AG04450 (cell line): ENCODE measurements at regions of chr4 and their contacts with region 1.

Region 1: GRCh38 chr4:140252742-140253555 is 99.0 kb upstream of the MAML3 start:
- DNase-seq: no peak
- H3K4me3 ChIP-seq: peak overlapping the region; percentile 55
- H3K27ac ChIP-seq: no peak overlapping the region
- H3K27me3 ChIP-seq: no peaks in the 10 kb centered on the region
- CTCF ChIP-seq: peak; percentile 78

Region 2: GRCh38 chr4:140012688-140013486 is 240.1 kb before region 1 on chr4:
- CTCF ChIA-PET with region 1: interaction called, 15 read pairs
- POLR2A ChIA-PET with region 1: no interaction called
- DNase-seq: peak; percentile 77
- H3K4me3 ChIP-seq: no peak overlapping the region
- H3K27ac ChIP-seq: no peak overlapping the region
- H3K27me3 ChIP-seq: no peaks in the 10 kb centered on the region
- CTCF ChIP-seq: peak; percentile 80

Region 3: GRCh38 chr4:140163029-140163810 is 89.7 kb before region 1 on chr4:
- CTCF ChIA-PET with region 1: interaction called, 14 read pairs
- POLR2A ChIA-PET with region 1: no interaction called
- DNase-seq: no peak
- H3K4me3 ChIP-seq: no peak overlapping the region
- H3K27ac ChIP-seq: peak overlapping the region; percentile 62
- H3K27me3 ChIP-seq: no peaks in the 10 kb centered on the region
- CTCF ChIP-seq: no peak

Region 4: GRCh38 chr4:140186651-140187315 is 66.2 kb before region 1 on chr4:
- CTCF ChIA-PET with region 1: no interaction called
- POLR2A ChIA-PET with region 1: no interaction called
- DNase-seq: peak; percentile 10
- H3K4me3 ChIP-seq: no peak overlapping the region
- H3K27ac ChIP-seq: no peak overlapping the region
- H3K27me3 ChIP-seq: no peaks in the 10 kb centered on the region
- CTCF ChIP-seq: no peak

Region 5: DNA sequence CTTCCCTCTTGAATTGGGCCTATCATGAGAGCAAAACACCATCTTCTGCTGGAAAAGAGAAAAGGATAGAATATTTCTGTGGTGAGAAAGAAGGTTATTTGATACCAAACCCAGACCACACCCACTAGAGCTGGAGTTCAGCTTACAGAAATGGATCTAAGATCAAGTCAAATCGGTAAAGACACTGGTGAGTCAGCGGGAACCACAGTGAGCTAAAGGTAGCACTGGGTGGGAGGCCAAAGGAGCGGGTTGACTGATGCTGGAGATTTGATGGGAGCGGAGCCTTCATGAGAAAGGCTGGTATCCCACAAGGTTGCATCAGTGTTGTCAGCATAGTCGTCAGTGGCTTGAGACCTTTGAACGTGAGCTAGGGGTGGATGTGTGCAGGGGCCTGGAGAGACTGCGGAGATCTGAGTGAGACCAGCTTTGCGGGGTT is 14.1 kb after region 1 on chr4:
- CTCF ChIA-PET with region 1: interaction called, 11 read pairs
- POLR2A ChIA-PET with region 1: no interaction called
- DNase-seq: peak; percentile 50
- H3K4me3 ChIP-seq: no peak overlapping the region
- H3K27ac ChIP-seq: peak overlapping the region; percentile 21
- H3K27me3 ChIP-seq: no peaks in the 10 kb centered on the region
- CTCF ChIP-seq: no peak